ENCODE measurements at regions of chr1 and their contacts with region 1.

Region 1: DNA sequence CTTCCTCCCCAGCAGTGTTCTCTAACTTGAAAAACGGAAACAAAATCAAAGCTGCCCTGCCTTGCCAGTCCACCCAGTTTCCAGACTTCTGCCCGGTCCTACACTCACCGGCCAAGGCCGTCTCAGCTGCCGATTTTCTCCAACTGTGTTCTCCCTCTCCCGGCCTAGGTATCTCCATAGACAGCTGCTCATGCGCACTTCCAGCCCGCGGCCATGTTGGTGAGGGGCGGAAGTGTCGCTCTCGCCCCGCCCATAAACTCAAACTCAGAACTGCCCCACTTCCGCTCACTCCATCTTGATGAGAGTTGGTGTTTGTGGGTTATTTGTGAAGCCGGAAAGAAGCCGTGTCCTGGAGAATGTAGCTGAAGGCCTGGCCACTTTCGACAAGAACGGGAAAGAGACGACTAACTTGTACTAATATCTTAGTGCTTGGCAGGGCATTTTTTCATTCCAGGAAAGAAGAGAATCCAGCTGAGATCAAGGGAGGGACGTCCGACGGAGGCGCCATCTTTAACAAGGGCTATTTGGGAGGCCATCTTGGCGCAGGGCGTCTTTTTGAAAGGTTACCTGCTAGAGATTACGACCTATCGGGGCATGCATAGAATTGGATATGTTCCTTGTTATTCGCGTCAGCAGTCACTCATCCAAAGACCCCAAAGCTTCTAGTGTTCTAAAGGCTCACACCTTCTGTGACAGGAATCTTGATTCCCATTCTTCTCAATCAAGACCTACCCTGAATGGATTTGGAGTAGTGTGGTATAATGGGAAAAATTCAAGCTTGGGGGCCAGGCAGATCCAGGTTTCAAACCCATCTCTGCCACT is at the start of gene USF1:
- DNase-seq: peak; percentile 78 to 96 (median 93)
- ATAC-seq: peak; percentile 70 to 81
- H3K4me3 Mint-ChIP-seq: peak within 1 kb of the TSS; percentile 91 to 100 (median 96)
- H3K27ac Mint-ChIP-seq: peak within 1 kb of the TSS; percentile 97 to 100 (median 99)
- H3K4me1 Mint-ChIP-seq: peaks cover 33 to 74% (median 56%) of the 10 kb centered on the region in 4 donors
- H3K27me3 Mint-ChIP-seq: no peaks in the 10 kb centered on the region
- polyA plus RNA-seq, gene USF1: 4.3 to 11.1 (median 7.4) TPM

Region 2: GRCh38 chr1:161021165-161021960 is 24.6 kb before region 1 on chr1:
- POLR2A ChIA-PET with region 1: interaction called, 46 read pairs
- DNase-seq: peak; percentile 78 to 95 (median 90)
- ATAC-seq: peak; percentile 94 to 97
- H3K4me3 Mint-ChIP-seq: peak overlapping the region; percentile 85 to 97 (median 90)
- H3K27ac Mint-ChIP-seq: peak overlapping the region; percentile 62 to 98 (median 94)
- H3K4me1 Mint-ChIP-seq: peaks cover 28 to 51% (median 45%) of the 10 kb centered on the region in 4 donors
- H3K27me3 Mint-ChIP-seq: peaks cover 0 to 2% (median 0%) of the 10 kb centered on the region in 5 donors

Region 3: DNA sequence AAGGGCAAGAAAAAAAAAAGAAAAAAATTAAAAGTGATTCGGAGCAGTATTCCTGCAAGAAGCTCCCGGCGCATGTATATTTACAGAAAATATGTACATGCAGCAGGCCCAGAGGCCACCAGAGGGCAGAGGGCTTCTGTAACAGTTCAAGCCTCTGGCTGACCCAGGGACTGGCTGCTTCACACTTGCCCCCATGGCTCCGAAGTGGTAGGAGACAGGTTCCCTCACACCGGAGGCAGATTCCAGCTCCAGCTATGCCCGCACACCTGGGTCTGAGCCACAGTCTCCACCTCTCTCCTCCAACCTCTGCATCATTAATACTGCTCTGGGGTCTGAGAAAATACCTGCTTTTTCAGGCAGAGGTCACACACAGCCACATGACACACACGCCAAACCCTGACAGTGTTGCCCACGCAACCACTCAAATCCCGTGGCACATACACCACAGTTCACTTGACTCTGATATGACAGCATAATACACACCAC is 26.0 kb after region 1 on chr1:
- POLR2A ChIA-PET with region 1: interaction called, 429 read pairs
- DNase-seq: peak; percentile 29 to 76 (median 44)
- ATAC-seq: no peak
- H3K4me3 Mint-ChIP-seq: peak overlapping the region in 4 of 10 donors; percentile 18 to 47 (median 24)
- H3K27ac Mint-ChIP-seq: peak overlapping the region; percentile 68 to 98 (median 88)
- H3K4me1 Mint-ChIP-seq: peaks cover 29 to 57% (median 46%) of the 10 kb centered on the region in 4 donors
- H3K27me3 Mint-ChIP-seq: no peaks in the 10 kb centered on the region

Region 4: GRCh38 chr1:161117759-161118581 is 72.0 kb after region 1 on chr1 and contains the starts of genes NIT1 and PFDN2:
- POLR2A ChIA-PET with region 1: interaction called, 15 read pairs
- DNase-seq: peak; percentile 76 to 88 (median 83)
- ATAC-seq: peak; percentile 82 to 86
- H3K4me3 Mint-ChIP-seq: peak within 1 kb of the TSS; percentile 91 to 97 (median 95)
- H3K27ac Mint-ChIP-seq: peak within 1 kb of the TSS; percentile 77 to 98 (median 95)
- H3K4me1 Mint-ChIP-seq: peaks cover 36 to 90% (median 68%) of the 10 kb centered on the region in 4 donors
- H3K27me3 Mint-ChIP-seq: no peaks in the 10 kb centered on the region
- polyA plus RNA-seq, gene NIT1: 16.8 to 25.0 (median 18.3) TPM
- polyA plus RNA-seq, gene PFDN2: 74.6 to 91.3 (median 86.0) TPM

Region 5: GRCh38 chr1:161153679-161154426 is 107.9 kb after region 1 on chr1 and contains the start of gene UFC1:
- POLR2A ChIA-PET with region 1: interaction called, 15 read pairs
- DNase-seq: peak; percentile 65 to 93 (median 84)
- ATAC-seq: peak; percentile 91 to 94
- H3K4me3 Mint-ChIP-seq: peak within 1 kb of the TSS; percentile 91 to 100 (median 98)
- H3K27ac Mint-ChIP-seq: peak within 1 kb of the TSS; percentile 99 to 100 (median 100)
- H3K4me1 Mint-ChIP-seq: peaks cover 15 to 39% (median 31%) of the 10 kb centered on the region in 4 donors
- H3K27me3 Mint-ChIP-seq: peaks cover 0 to 1% (median 0%) of the 10 kb centered on the region in 5 donors
- polyA plus RNA-seq, gene UFC1: 148 to 158 (median 155) TPM

Region 6: GRCh38 chr1:161209790-161210409 is 163.9 kb after region 1 on chr1:
- POLR2A ChIA-PET with region 1: interaction called, 10 read pairs
- DNase-seq: peak; percentile 62 to 90 (median 75)
- ATAC-seq: peak; percentile 96 to 97
- H3K4me3 Mint-ChIP-seq: no peak overlapping the region
- H3K27ac Mint-ChIP-seq: peak overlapping the region; percentile 46 to 91 (median 83)
- H3K4me1 Mint-ChIP-seq: peaks cover 22 to 54% (median 45%) of the 10 kb centered on the region in 4 donors
- H3K27me3 Mint-ChIP-seq: no peaks in the 10 kb centered on the region